ENCODE measurements at regions of chr9 and their contacts with region 1.

Region 1: DNA sequence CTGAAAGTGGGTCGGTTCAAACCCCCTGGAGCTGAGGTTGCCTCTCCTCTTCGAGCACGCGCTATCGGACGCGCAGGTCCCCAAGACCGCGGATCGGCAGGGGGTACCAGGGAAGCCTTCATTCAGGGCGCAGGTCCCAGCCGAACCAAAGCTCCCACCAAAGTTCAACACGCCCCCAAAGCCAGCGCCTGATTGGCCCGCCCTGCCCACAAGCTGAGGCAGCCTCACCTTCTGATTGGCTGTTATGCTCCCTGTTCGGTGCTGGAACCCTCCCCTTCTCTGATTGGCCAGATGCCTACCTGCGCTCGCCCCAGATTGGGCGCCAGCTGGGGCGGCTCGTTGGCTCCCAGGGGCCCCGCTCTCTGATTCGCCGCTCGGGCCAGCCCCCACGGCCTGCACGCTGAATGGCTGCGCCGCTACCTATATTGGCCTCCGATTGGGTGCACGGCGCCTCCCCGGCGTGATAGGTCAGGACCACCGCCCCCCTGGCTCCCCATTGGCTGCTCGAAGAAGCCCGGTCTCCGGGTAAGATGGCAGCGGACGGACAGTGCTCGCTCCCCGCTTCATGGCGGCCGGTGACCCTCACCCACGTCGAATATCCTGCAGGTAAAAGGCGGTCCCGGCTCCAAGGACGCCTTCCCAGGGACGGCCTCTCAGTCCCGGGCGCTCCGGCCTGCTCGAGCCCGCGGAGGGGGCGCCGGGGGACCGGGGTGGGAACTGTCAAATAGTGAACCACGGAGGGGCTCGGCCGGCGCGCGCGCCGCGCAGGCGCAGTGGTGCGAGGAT is at the start of gene DOLPP1:
- DNase-seq: peak; percentile 99
- ATAC-seq: peak; percentile 92
- H3K4me3 ChIP-seq: peak within 1 kb of the TSS; percentile 67 to 90 (median 75)
- H3K4me3 Mint-ChIP-seq: peak within 1 kb of the TSS; percentile 91
- H3K27ac ChIP-seq: peak within 1 kb of the TSS; percentile 42 to 79
- H3K27ac Mint-ChIP-seq: peak within 1 kb of the TSS; percentile 88
- H3K4me1 ChIP-seq: peaks cover 16 to 20% of the 10 kb centered on the region in 2 donors
- H3K4me1 Mint-ChIP-seq: peaks cover 23% of the 10 kb centered on the region
- H3K27me3 ChIP-seq: no peaks in the 10 kb centered on the region
- H3K27me3 Mint-ChIP-seq: no peaks in the 10 kb centered on the region
- CTCF ChIP-seq: no peak
- total RNA-seq, gene DOLPP1: 4.7 and 7.1 TPM in 2 replicates

Region 2: DNA sequence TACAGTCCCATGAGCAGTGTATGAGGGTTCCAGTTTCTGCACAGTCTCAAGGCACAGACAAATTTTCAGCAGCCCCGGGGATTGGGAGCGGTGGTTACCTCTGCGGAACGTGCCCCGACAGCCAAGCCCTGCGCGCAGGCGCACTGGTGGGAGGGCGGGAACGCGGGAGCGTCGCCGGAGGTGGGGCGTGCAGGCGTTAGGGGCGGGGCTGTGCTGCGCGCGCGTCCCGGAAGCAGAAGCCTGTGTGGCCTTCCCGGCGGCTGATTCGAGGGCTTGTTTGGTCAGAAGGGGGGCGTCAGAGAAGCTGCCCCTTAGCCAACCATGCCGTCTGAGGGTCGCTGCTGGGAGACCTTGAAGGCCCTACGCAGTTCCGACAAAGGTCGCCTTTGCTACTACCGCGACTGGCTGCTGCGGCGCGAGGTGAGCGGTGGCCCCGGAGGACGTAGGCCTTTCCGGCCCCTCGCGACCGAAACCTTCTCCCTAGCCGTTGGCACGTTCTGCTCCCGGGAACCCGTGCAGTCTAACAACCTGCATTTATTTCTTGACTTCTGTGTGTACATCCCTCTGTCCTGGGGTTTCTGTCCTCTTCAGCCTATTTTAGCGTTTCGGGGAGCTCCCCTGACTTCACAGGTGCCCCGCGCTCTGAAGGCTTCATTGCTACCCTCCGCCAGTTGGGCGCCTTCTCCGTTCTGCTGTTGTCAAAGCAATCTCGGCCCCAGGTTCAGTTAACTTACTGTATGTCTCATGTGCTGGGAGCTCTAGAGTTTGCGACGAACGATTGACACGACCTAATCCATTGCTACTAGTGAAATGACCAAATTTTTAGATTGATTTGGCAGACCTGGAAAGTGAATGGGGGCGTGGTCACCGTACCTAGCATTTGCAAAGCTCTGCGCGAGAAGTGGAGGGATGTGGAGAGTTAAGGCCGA is 576.0 kb before region 1 on chr9 and contains the start of gene GLE1:
- CTCF ChIA-PET with region 1: no interaction called
- POLR2A ChIA-PET with region 1: no interaction called
- intact Hi-C with region 1: loop called (anchors 2 kb)
- DNase-seq: peak; percentile 97
- ATAC-seq: peak; percentile 93
- H3K4me3 ChIP-seq: peak within 1 kb of the TSS; percentile 85 to 97 (median 87)
- H3K4me3 Mint-ChIP-seq: peak within 1 kb of the TSS; percentile 100
- H3K27ac ChIP-seq: peak within 1 kb of the TSS; percentile 69 to 80
- H3K27ac Mint-ChIP-seq: peak within 1 kb of the TSS; percentile 99
- H3K4me1 ChIP-seq: peaks cover 8 to 13% of the 10 kb centered on the region in 2 donors
- H3K4me1 Mint-ChIP-seq: peaks cover 23% of the 10 kb centered on the region
- H3K27me3 ChIP-seq: no peaks in the 10 kb centered on the region
- H3K27me3 Mint-ChIP-seq: no peaks in the 10 kb centered on the region
- CTCF ChIP-seq: no peak
- total RNA-seq, gene GLE1: 30.3 and 31.9 TPM in 2 replicates

Region 3: GRCh38 chr9:129028192-129028957 is 52.4 kb before region 1 on chr9 and contains the start of gene SH3GLB2:
- CTCF ChIA-PET with region 1: interaction called, 6 read pairs
- POLR2A ChIA-PET with region 1: interaction called, 10 read pairs
- intact Hi-C with region 1: loop called (anchors 2 kb)
- DNase-seq: peak; percentile 93
- ATAC-seq: peak; percentile 96
- H3K4me3 ChIP-seq: peak within 1 kb of the TSS; percentile 11 to 76 (median 63)
- H3K4me3 Mint-ChIP-seq: peak within 1 kb of the TSS; percentile 89
- H3K27ac ChIP-seq: peak within 1 kb of the TSS in 1 of 2 donors; percentile 70
- H3K27ac Mint-ChIP-seq: peak within 1 kb of the TSS; percentile 84
- H3K4me1 ChIP-seq: peaks cover 11 to 16% of the 10 kb centered on the region in 2 donors
- H3K4me1 Mint-ChIP-seq: peaks cover 19% of the 10 kb centered on the region
- H3K27me3 ChIP-seq: no peaks in the 10 kb centered on the region
- H3K27me3 Mint-ChIP-seq: no peaks in the 10 kb centered on the region
- CTCF ChIP-seq: peak; percentile 21
- total RNA-seq, gene SH3GLB2: 110 and 111 TPM in 2 replicates